PC-3 (cell line): ENCODE measurements at regions of chr7 and their contacts with region 1.

Region 1: GRCh38 chr7:79132844-79133451 is 320.5 kb downstream of the MAGI2 start:
- DNase-seq: peak; percentile 76
- ATAC-seq: peak; percentile 93
- H3K4me3 ChIP-seq: no peak overlapping the region
- H3K27ac ChIP-seq: peak overlapping the region; percentile 33
- H3K4me1 ChIP-seq: peaks cover 19% of the 10 kb centered on the region
- H3K27me3 ChIP-seq: no peaks in the 10 kb centered on the region
- CTCF ChIP-seq: no peak

Region 2: GRCh38 chr7:78970440-78970916 is 162.5 kb before region 1 on chr7:
- CTCF ChIA-PET with region 1: no interaction called
- POLR2A ChIA-PET with region 1: no interaction called
- intact Hi-C with region 1: loop called (anchors 5 kb)
- DNase-seq: peak; percentile 83
- ATAC-seq: peak; percentile 80
- H3K4me3 ChIP-seq: no peak overlapping the region
- H3K27ac ChIP-seq: peak overlapping the region; percentile 49
- H3K4me1 ChIP-seq: peaks cover 43% of the 10 kb centered on the region
- H3K27me3 ChIP-seq: no peaks in the 10 kb centered on the region
- CTCF ChIP-seq: no peak

Region 3: DNA sequence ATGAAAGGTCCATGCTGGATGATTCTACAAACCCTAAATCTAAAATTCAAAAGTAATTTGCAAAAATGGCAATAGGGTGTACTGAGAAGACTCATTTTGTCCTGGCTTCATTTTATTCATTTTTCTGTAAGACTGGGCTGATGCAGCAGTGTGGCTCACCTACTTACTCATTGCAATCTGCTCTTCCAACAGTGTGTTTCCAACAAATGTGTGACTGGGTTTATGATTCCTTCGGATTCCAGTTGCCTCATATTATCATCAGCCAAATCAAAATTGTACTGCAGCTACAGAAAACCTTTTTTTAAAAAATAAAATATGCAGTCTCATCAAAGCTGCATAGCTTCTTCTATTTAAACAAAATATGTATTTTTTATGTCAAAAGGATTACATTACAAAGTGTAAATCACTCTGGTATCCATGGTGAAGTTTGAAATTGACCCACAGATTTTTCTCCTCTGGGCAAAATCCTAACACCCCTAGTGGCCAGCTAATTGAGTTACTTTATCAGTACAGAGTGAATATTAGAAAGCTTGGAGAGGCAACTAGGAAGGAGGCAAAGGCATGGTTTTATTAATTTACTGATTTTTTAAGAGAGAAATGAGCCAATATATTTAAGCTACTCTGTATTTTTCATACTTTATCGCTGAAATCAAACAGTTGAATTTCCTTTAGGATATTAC is 69.8 kb before region 1 on chr7:
- CTCF ChIA-PET with region 1: no interaction called
- POLR2A ChIA-PET with region 1: no interaction called
- intact Hi-C with region 1: no loop called
- DNase-seq: no peak
- ATAC-seq: no peak
- H3K4me3 ChIP-seq: no peak overlapping the region
- H3K27ac ChIP-seq: no peak overlapping the region
- H3K4me1 ChIP-seq: no peaks in the 10 kb centered on the region
- H3K27me3 ChIP-seq: no peaks in the 10 kb centered on the region
- CTCF ChIP-seq: peak; percentile 46; the same call in 1 of the 2 replicates

Region 4: DNA sequence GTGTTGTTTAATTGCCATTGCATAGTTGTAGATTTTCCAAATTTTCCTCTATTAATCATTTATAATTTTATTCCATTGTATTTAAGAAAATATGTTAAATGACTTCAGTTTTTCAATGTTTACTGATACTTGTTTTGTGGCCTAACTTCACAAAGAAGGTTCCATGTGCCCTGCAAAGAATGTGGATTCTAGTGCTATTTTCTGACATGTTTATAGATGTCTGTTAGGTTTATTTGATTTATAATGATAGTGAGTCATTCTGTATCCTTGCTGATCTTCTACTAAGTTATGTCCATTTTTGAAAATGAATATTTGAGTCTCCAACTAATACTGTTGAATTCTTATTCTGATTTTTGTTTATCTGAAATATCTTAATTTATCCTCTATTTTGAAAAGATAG is 48.5 kb before region 1 on chr7:
- CTCF ChIA-PET with region 1: no interaction called
- POLR2A ChIA-PET with region 1: no interaction called
- intact Hi-C with region 1: loop called (anchors 5 kb)
- DNase-seq: peak; percentile 54
- ATAC-seq: peak; percentile 89
- H3K4me3 ChIP-seq: no peak overlapping the region
- H3K27ac ChIP-seq: no peak overlapping the region
- H3K4me1 ChIP-seq: peaks cover 12% of the 10 kb centered on the region
- H3K27me3 ChIP-seq: no peaks in the 10 kb centered on the region
- CTCF ChIP-seq: no peak